Activated B cell treated with CpG ODN at 0.5 μM for 24 hours (primary cell): ENCODE measurements at regions of chr18 and their contacts with region 1.

Region 1: DNA sequence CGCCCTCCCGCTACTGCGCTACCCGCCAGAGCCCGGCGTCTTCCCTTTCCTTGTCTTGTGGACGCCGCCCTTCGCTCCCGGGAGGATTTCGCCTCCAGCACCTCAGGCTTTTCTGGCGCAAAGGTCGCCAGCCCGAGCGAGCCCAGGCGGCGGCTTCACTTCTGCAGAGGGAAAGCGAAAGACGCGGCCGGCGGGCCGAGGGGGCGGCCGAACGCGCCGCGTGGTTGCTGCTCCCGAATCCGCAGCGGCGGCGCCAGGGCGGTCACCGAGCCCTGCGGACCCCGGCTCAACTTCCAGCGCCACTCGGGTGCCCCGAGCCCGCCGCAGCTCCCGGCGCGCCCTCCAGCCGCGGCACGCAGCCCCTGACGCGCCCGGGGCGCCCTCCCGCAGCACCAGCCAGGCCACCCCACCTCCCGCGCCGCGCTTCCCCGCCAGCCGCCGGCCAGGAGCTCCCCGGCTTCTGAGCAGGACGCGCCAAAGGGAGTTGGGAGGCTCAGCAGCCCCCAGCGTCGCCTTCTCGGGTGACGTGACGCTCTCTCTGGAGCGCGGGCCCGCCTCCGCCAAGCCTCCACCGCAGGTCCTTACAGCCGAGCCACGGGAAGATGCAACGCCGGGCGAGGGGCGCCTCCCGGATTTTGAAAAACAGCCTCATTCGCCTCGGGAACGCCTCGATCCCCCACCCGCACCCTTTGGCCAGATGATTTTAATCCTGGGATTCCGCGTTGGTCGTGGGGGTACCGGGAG is 84.9 kb upstream of the EPB41L3 start:
- DNase-seq: no peak
- ATAC-seq: no peak
- H3K4me3 Mint-ChIP-seq: no peak overlapping the region
- H3K27ac Mint-ChIP-seq: no peak overlapping the region
- H3K4me1 Mint-ChIP-seq: peaks cover 9% of the 10 kb centered on the region
- H3K27me3 Mint-ChIP-seq: peaks cover 19% of the 10 kb centered on the region
- CTCF ChIP-seq: no peak

Region 2: GRCh38 chr18:6352275-6352674 is 723.6 kb after region 1 on chr18:
- CTCF ChIA-PET with region 1: no interaction called
- POLR2A ChIA-PET with region 1: no interaction called
- intact Hi-C with region 1: loop called (anchors 5 kb)
- DNase-seq: no peak
- ATAC-seq: no peak
- H3K4me3 Mint-ChIP-seq: no peak overlapping the region
- H3K27ac Mint-ChIP-seq: no peak overlapping the region
- H3K4me1 Mint-ChIP-seq: peaks cover 15% of the 10 kb centered on the region
- H3K27me3 Mint-ChIP-seq: no peaks in the 10 kb centered on the region
- CTCF ChIP-seq: no peak